ENCODE measurements at regions of chr17 and their contacts with region 1.

Region 1: GRCh38 chr17:40287494-40288369 is at the start of gene CDC6:
- DNase-seq: peak; percentile 99
- H3K4me3 ChIP-seq: peak within 1 kb of the TSS; percentile 53 to 84 (median 70)
- H3K27ac ChIP-seq: peak within 1 kb of the TSS; percentile 88
- H3K4me1 ChIP-seq: peaks cover 38% of the 10 kb centered on the region
- H3K27me3 ChIP-seq: no peaks in the 10 kb centered on the region
- CTCF ChIP-seq: no peak
- total RNA-seq, gene CDC6: 5.2 to 61.8 TPM

Region 2: DNA sequence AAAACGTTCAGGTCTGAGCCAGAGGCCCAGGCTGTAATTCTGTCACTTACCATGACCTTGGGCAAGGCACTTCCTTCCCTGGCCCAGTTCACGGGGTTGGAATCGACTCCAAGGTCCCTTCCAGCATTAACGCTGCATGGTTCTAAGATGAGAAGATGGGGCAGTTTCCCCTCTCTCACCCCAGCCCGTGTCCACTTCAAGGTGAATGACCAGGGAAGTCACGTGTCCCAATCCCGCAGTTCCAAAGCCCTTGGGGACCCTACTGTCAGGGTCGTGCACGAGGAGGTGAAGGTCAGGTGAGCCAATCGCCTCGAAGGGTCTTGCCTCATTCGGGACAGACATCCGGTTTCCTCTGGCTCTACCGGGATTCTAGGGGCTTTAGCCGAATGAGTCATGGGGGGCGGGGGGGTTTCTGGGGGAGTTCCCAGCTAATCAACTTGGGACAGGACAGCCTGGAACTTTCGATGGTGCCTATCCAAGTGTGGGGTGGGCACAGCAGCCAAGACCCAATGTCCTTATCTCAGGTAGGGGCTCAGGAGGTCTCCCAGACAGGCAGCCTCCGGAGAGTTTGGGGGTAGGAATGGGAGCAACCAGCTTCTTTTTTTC is 273.3 kb before region 1 on chr17:
- CTCF ChIA-PET with region 1: no interaction called
- dilution Hi-C with region 1: no loop called
- in situ Hi-C with region 1: no loop called
- intact Hi-C with region 1: loop called (anchors 5 kb)
- DNase-seq: no peak
- H3K4me3 ChIP-seq: no peak overlapping the region
- H3K27ac ChIP-seq: no peak overlapping the region
- H3K4me1 ChIP-seq: peaks cover 50% of the 10 kb centered on the region
- H3K27me3 ChIP-seq: no peaks in the 10 kb centered on the region
- CTCF ChIP-seq: no peak

Region 3: GRCh38 chr17:40168262-40168832 is 119.4 kb before region 1 on chr17:
- CTCF ChIA-PET with region 1: no interaction called
- dilution Hi-C with region 1: no loop called
- in situ Hi-C with region 1: no loop called
- intact Hi-C with region 1: loop called (anchors 1 kb)
- DNase-seq: peak; percentile 49
- H3K4me3 ChIP-seq: no peak overlapping the region
- H3K27ac ChIP-seq: no peak overlapping the region
- H3K4me1 ChIP-seq: peaks cover 3% of the 10 kb centered on the region
- H3K27me3 ChIP-seq: no peaks in the 10 kb centered on the region
- CTCF ChIP-seq: peak; percentile 75 to 80

Region 4: GRCh38 chr17:40203131-40203530 is 84.6 kb before region 1 on chr17:
- CTCF ChIA-PET with region 1: interaction called, 6 read pairs
- dilution Hi-C with region 1: no loop called
- in situ Hi-C with region 1: loop called (anchors 5 kb)
- intact Hi-C with region 1: loop called (anchors 1 kb)
- DNase-seq: no peak
- H3K4me3 ChIP-seq: no peak overlapping the region
- H3K27ac ChIP-seq: no peak overlapping the region
- H3K4me1 ChIP-seq: no peaks in the 10 kb centered on the region
- H3K27me3 ChIP-seq: no peaks in the 10 kb centered on the region
- CTCF ChIP-seq: no peak

Region 5: GRCh38 chr17:40417609-40418427 is 130.1 kb after region 1 on chr17 and contains the start of gene TOP2A:
- CTCF ChIA-PET with region 1: no interaction called
- dilution Hi-C with region 1: no loop called
- in situ Hi-C with region 1: loop called in 1 of 2 experiments (anchors 10 kb)
- intact Hi-C with region 1: no loop called
- DNase-seq: peak; percentile 100
- H3K4me3 ChIP-seq: peak within 1 kb of the TSS; percentile 81 to 98 (median 89)
- H3K27ac ChIP-seq: peak within 1 kb of the TSS; percentile 74
- H3K4me1 ChIP-seq: peaks cover 15% of the 10 kb centered on the region
- H3K27me3 ChIP-seq: no peaks in the 10 kb centered on the region
- CTCF ChIP-seq: no peak
- total RNA-seq, gene TOP2A: 3.2 to 93.3 TPM